ENCODE measurements at regions of chr3 and their contacts with region 1.

Region 1: GRCh38 chr3:31531992-31532586 is 636 bp upstream of the STT3B start:
- DNase-seq: peak; percentile 100

Region 2: DNA sequence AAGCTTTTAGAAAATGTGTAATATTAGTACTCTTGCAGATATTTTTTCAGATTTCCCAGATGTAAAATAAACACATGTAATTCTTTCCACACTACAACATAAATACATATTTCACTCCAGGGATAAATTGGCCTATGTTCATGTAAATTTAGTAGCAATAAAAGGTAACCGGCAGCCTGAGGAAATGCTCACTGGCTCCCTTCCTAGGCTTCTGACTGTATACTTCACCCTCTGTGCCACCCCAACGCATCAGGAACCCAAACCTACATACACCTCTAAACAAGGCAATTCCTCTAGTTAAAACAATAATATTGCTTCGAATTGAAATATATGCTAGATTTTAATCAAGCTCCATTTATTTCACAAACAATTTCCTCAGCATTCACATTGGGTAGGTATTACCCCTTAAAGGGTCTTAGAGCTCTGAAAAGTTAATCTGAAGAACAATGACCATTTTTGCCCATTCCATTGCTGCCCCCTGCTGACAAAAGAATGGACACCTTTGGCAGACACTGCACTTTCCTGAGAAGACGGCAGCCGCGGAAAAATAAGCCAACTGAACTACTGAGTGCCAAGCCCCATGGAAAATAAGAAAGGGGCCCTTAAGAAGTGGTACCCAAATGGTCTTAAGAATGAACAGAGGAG is 236.5 kb after region 1 on chr3:
- intact Hi-C with region 1: loop called (anchors 5 kb)
- DNase-seq: no peak

Region 3: DNA sequence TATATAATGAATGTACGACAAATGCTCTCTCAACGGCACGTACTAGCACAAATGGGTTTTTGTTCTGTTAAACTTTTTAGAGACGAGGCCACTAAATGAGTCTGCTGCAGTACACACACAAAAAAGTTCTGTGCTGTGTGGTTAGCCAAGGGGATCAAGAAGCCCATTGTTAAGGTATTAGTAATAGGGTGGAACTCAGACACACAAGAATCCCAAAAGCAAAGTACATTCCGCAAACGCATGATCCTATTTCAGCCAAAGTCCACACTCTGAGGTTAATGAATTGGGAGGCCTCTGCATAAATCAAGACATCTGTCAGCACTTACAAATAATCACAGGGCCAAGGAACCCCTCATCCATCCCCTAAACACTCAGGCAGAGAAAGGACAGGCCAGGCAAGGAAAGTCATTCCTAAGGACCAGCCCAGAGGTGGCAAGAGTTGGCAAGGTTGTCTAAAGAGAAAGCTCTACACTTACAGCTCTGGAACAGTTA is 436.9 kb after region 1 on chr3:
- intact Hi-C with region 1: loop called (anchors 10 kb)
- DNase-seq: no peak

Region 4: GRCh38 chr3:32120471-32120870 is 588.4 kb after region 1 on chr3:
- intact Hi-C with region 1: loop called (anchors 10 kb)
- DNase-seq: no peak

Measured in cardiac septum (tissue), 1 donor.